ENCODE measurements at regions of chr17 and their contacts with region 1.

Region 1: DNA sequence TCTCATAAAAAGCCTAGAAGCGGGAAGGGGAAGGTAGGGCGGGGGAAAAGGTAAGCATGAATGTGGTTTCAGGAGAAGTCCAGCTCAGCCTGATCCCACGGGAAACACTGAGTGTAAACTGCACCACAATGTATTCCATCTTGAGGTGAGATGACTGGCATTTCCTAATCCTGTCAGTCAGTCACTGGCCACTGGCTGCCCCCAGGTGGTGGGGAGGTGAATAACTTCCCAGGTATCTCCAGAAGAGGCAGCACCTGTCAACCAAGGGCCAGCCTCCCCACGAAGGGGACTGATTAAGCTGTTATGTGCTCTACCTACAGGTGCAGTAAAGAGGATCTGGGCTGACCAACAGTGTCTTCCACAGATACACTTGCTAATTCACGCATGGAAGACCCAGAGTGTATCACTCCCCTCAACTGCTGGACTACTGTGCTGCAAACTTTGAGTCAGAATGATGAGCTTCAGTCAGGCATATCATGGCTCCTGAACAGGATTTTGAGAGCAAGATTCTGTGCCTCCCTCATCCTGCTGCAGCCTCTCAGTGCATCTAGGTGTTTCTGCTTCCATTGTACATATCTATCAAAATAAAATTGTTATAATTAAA is 108.5 kb upstream of the CCL2 start:
- DNase-seq: peak; percentile 66 to 73 (median 69)
- ATAC-seq: peak; percentile 92
- H3K4me3 ChIP-seq: no peak overlapping the region
- H3K27ac ChIP-seq: no peak overlapping the region
- H3K4me1 ChIP-seq: no peaks in the 10 kb centered on the region
- H3K27me3 ChIP-seq: no peaks in the 10 kb centered on the region
- CTCF ChIP-seq: peak; percentile 90 to 98 (median 93)
- EP300 ChIP-seq: no peak
- POLR2A ChIP-seq: no peak
- RAD21 ChIP-seq: peak; percentile 52 to 84

Region 2: GRCh38 chr17:33854596-33854995 is 291.9 kb before region 1 on chr17:
- CTCF ChIA-PET with region 1: no interaction called
- POLR2A ChIA-PET with region 1: no interaction called
- in situ Hi-C with region 1: loop called (anchors 5 kb)
- intact Hi-C with region 1: no loop called
- DNase-seq: no peak
- ATAC-seq: no peak
- H3K4me3 ChIP-seq: no peak overlapping the region
- H3K27ac ChIP-seq: no peak overlapping the region
- H3K4me1 ChIP-seq: peaks cover 0 to 13% of the 10 kb centered on the region in 2 experiments; a peak in 3 of 5 replicates
- H3K27me3 ChIP-seq: peaks cover 7 to 9% of the 10 kb centered on the region in 2 experiments; a peak in 3 of 5 replicates
- CTCF ChIP-seq: no peak
- EP300 ChIP-seq: no peak
- POLR2A ChIP-seq: no peak
- RAD21 ChIP-seq: no peak

Region 3: GRCh38 chr17:33927732-33928133 is 218.8 kb before region 1 on chr17:
- CTCF ChIA-PET with region 1: interaction called, 13 read pairs
- POLR2A ChIA-PET with region 1: no interaction called
- in situ Hi-C with region 1: no loop called
- intact Hi-C with region 1: loop called (anchors 5 kb)
- DNase-seq: peak; percentile 47 to 57 (median 52)
- ATAC-seq: peak; percentile 41; the same call in 2 of the 3 replicates
- H3K4me3 ChIP-seq: no peak overlapping the region
- H3K27ac ChIP-seq: no peak overlapping the region; the same call in 2 of the 3 replicates
- H3K4me1 ChIP-seq: peaks cover 29 to 83% of the 10 kb centered on the region in 2 experiments; a peak in 4 of 5 replicates
- H3K27me3 ChIP-seq: no peaks in the 10 kb centered on the region
- CTCF ChIP-seq: peak; percentile 42 to 85 (median 73); a peak in 5 of 6 replicates
- EP300 ChIP-seq: no peak
- POLR2A ChIP-seq: no peak
- RAD21 ChIP-seq: peak; percentile 76 to 81